ENCODE measurements at regions of chr22 and their contacts with region 1.

Region 1: GRCh38 chr22:30754971-30755756 is 60.5 kb downstream of the OSBP2 start:
- DNase-seq: peak; percentile 65
- H3K4me3 ChIP-seq: no peak overlapping the region
- H3K27ac ChIP-seq: no peak overlapping the region
- H3K4me1 ChIP-seq: no peaks in the 10 kb centered on the region
- H3K27me3 ChIP-seq: no peaks in the 10 kb centered on the region
- CTCF ChIP-seq: peak; percentile 67 to 92

Region 2: GRCh38 chr22:30444632-30445437 is 310.3 kb before region 1 on chr22:
- CTCF ChIA-PET with region 1: no interaction called
- dilution Hi-C with region 1: no loop called
- in situ Hi-C with region 1: no loop called
- intact Hi-C with region 1: loop called (anchors 1 kb)
- DNase-seq: peak; percentile 34
- H3K4me3 ChIP-seq: no peak overlapping the region
- H3K27ac ChIP-seq: no peak overlapping the region
- H3K4me1 ChIP-seq: peaks cover 14% of the 10 kb centered on the region
- H3K27me3 ChIP-seq: no peaks in the 10 kb centered on the region
- CTCF ChIP-seq: peak; percentile 74 to 80

Region 3: GRCh38 chr22:30667494-30668385 is 87.4 kb before region 1 on chr22 and contains the start of gene DUSP18:
- CTCF ChIA-PET with region 1: no interaction called
- dilution Hi-C with region 1: no loop called
- in situ Hi-C with region 1: no loop called
- intact Hi-C with region 1: loop called (anchors 1 kb)
- DNase-seq: peak; percentile 93
- H3K4me3 ChIP-seq: peak within 1 kb of the TSS; percentile 66 to 76 (median 71)
- H3K27ac ChIP-seq: peak within 1 kb of the TSS; percentile 65
- H3K4me1 ChIP-seq: peaks cover 17% of the 10 kb centered on the region
- H3K27me3 ChIP-seq: no peaks in the 10 kb centered on the region
- CTCF ChIP-seq: peak; percentile 36 to 41
- total RNA-seq, gene DUSP18: 8.3 to 10.5 TPM

Region 4: DNA sequence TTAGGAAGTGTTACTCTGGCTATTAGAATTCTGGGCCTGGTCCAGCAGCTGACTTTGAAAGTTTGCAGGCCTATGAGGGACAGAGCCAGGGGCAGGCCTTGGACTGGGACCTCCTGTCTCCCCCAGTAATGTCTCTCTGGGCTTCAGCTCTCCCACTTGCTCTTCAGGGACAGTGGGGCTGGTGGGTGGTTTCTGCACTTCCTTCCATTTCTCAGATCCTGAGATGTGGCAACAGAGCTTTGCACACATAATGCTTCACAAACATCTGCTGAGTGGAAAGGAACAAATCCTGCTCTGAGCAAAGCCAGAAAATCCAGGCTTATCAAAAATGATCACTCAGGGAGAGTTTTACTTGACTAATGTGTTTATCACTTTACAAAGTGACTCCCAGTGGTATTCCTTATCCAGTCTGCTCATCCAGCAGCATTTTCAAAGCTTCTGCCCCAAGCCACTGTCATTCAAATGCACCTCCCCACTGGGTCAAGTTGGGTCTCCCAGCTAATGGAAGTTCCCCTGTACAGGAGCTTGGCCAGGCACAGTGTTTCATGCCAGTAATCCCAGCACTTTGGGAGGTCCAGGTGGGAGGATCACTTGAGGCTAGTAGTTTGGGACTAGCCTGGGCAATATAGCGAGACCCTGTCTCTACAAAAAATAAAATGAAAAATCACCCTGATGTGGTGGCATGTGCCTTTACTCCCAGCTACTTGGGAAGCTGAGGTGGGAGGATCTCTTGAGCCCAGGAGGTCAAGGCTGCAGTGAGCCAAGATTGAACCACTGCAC is 74.0 kb before region 1 on chr22:
- CTCF ChIA-PET with region 1: no interaction called
- dilution Hi-C with region 1: loop called (anchors 5 kb)
- in situ Hi-C with region 1: no loop called
- intact Hi-C with region 1: no loop called
- DNase-seq: no peak
- H3K4me3 ChIP-seq: no peak overlapping the region
- H3K27ac ChIP-seq: no peak overlapping the region
- H3K4me1 ChIP-seq: no peaks in the 10 kb centered on the region
- H3K27me3 ChIP-seq: no peaks in the 10 kb centered on the region
- CTCF ChIP-seq: no peak

Region 5: GRCh38 chr22:30694171-30694639 is 61.0 kb before region 1 on chr22:
- CTCF ChIA-PET with region 1: no interaction called
- dilution Hi-C with region 1: no loop called
- in situ Hi-C with region 1: no loop called
- intact Hi-C with region 1: loop called (anchors 2 kb)
- DNase-seq: peak; percentile 21
- H3K4me3 ChIP-seq: peak overlapping the region; percentile 40 to 70 (median 70)
- H3K27ac ChIP-seq: no peak overlapping the region
- H3K4me1 ChIP-seq: peaks cover 3% of the 10 kb centered on the region
- H3K27me3 ChIP-seq: no peaks in the 10 kb centered on the region
- CTCF ChIP-seq: no peak

Measured in mammary epithelial cell (primary cell).